A673 (cell line): ENCODE measurements at regions of chr10 and their contacts with region 1.

Region 1: GRCh38 chr10:57338823-57339558 is 928.7 kb downstream of the IPMK start:
- DNase-seq: peak; percentile 55
- H3K4me3 ChIP-seq: no peak overlapping the region
- H3K27ac ChIP-seq: no peak overlapping the region
- H3K4me1 ChIP-seq: no peaks in the 10 kb centered on the region
- H3K27me3 ChIP-seq: no peaks in the 10 kb centered on the region
- CTCF ChIP-seq: peak; percentile 68

Region 2: GRCh38 chr10:57362811-57363210 is 23.8 kb after region 1 on chr10:
- CTCF ChIA-PET with region 1: no interaction called
- POLR2A ChIA-PET with region 1: no interaction called
- intact Hi-C with region 1: no loop called
- DNase-seq: no peak
- H3K4me3 ChIP-seq: no peak overlapping the region
- H3K27ac ChIP-seq: no peak overlapping the region
- H3K4me1 ChIP-seq: no peaks in the 10 kb centered on the region
- H3K27me3 ChIP-seq: no peaks in the 10 kb centered on the region
- CTCF ChIP-seq: no peak

Region 3: GRCh38 chr10:57657164-57657765 is 318.3 kb after region 1 on chr10:
- CTCF ChIA-PET with region 1: no interaction called
- POLR2A ChIA-PET with region 1: no interaction called
- intact Hi-C with region 1: loop called (anchors 2 kb)
- DNase-seq: peak; percentile 43
- H3K4me3 ChIP-seq: no peak overlapping the region
- H3K27ac ChIP-seq: no peak overlapping the region
- H3K4me1 ChIP-seq: no peaks in the 10 kb centered on the region
- H3K27me3 ChIP-seq: no peaks in the 10 kb centered on the region
- CTCF ChIP-seq: peak; percentile 78

Region 4: DNA sequence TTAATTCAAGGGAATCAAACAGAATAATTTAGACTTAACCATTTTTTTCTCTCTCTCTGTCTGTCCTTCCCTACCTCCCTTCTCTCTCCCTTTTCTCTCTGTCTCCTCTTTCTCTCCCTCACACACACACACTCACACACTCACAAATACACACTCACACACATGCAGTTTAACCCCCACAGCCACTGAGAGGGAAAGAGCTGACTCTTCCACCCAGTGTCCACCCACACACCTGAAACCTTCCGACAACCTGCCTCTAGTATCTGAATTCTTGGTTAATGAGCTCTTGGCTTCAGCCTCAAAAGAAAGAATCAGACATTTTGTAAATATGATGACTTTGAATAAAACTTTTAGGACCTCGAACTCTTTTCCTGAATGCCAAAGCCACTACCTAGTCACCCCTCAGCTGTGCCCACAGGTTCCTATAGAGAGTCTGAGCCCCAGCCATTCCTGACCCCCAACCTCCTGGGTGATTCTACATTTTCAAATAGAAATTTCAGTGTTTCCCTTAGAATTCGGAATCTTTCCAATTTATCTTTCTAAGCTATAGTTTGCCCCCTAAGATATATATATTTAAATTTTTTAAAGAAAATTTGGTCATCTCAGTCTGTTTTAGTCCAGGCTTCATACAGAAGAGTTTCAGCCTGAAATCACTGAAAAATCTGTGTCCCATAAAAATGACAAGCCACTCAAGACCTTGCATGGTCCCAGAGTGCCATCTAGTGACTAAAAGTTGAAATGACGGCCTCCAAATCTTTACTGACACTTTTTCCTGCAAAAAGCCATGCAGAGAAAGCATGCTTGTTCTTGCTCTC is 725.9 kb after region 1 on chr10:
- CTCF ChIA-PET with region 1: no interaction called
- POLR2A ChIA-PET with region 1: no interaction called
- intact Hi-C with region 1: loop called (anchors 2 kb)
- DNase-seq: peak; percentile 45
- H3K4me3 ChIP-seq: no peak overlapping the region
- H3K27ac ChIP-seq: no peak overlapping the region
- H3K4me1 ChIP-seq: no peaks in the 10 kb centered on the region
- H3K27me3 ChIP-seq: peaks cover 6% of the 10 kb centered on the region
- CTCF ChIP-seq: peak; percentile 69

Region 5: GRCh38 chr10:58152673-58153263 is 813.8 kb after region 1 on chr10:
- CTCF ChIA-PET with region 1: no interaction called
- POLR2A ChIA-PET with region 1: no interaction called
- intact Hi-C with region 1: loop called (anchors 2 kb)
- DNase-seq: peak; percentile 70
- H3K4me3 ChIP-seq: no peak overlapping the region
- H3K27ac ChIP-seq: no peak overlapping the region
- H3K4me1 ChIP-seq: no peaks in the 10 kb centered on the region
- H3K27me3 ChIP-seq: peaks cover 3% of the 10 kb centered on the region
- CTCF ChIP-seq: peak; percentile 73